Activated CD4-positive, alpha-beta memory T cell treated with anti-CD3 and anti-CD28 coated beads for 36 hours (primary cell): ENCODE measurements at regions of chr1 and their contacts with region 1.

Region 1: DNA sequence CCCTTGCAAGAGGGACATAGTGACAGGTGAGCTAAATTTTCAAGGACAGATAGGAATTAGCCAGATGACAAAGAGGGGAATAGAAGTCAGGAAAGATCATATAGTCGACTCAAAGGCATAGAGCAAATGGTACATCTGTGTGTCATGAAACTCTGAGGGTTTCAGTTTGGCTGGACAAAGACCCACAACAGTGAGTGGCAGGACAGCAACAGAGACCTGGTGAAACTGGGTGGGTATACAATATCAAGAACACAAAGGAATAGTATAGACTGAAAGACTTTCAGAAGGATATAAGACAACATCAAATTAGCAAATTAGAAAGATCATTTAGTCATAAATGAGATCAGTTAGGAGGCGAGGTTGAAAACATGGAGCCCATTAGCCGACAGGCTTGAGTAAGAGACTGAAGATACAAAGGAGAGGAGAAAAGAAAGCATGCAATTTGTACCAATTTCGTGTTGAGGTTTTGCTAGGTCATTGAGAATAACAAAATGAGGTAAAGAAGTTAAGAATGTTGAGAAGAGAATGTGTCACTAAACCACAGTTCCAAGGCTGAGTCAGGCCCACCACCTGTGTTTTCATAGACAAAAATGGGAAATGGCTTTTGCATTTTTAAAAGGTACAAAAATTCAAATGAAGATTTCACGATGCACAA is 213.8 kb downstream of the HHIPL2 start:
- DNase-seq: peak; percentile 40
- H3K4me3 Mint-ChIP-seq: no peak overlapping the region
- H3K27ac Mint-ChIP-seq: no peak overlapping the region
- H3K4me1 Mint-ChIP-seq: no peaks in the 10 kb centered on the region
- H3K27me3 Mint-ChIP-seq: no peaks in the 10 kb centered on the region

Region 2: GRCh38 chr1:221945669-221946068 is 388.5 kb before region 1 on chr1:
- CTCF ChIA-PET with region 1: no interaction called
- POLR2A ChIA-PET with region 1: no interaction called
- intact Hi-C with region 1: no loop called
- DNase-seq: no peak
- H3K4me3 Mint-ChIP-seq: no peak overlapping the region
- H3K27ac Mint-ChIP-seq: no peak overlapping the region
- H3K4me1 Mint-ChIP-seq: no peaks in the 10 kb centered on the region
- H3K27me3 Mint-ChIP-seq: no peaks in the 10 kb centered on the region

Region 3: GRCh38 chr1:222416001-222416791 is 82.0 kb after region 1 on chr1:
- CTCF ChIA-PET with region 1: no interaction called
- POLR2A ChIA-PET with region 1: no interaction called
- intact Hi-C with region 1: loop called (anchors 1 kb)
- DNase-seq: peak; percentile 65
- H3K4me3 Mint-ChIP-seq: no peak overlapping the region
- H3K27ac Mint-ChIP-seq: no peak overlapping the region
- H3K4me1 Mint-ChIP-seq: peaks cover 57% of the 10 kb centered on the region
- H3K27me3 Mint-ChIP-seq: no peaks in the 10 kb centered on the region